Common myeloid progenitor, CD34-positive (primary cell): ENCODE measurements at regions of chr11 and their contacts with region 1.

Region 1: GRCh38 chr11:119057000-119057769 is at the start of gene HYOU1:
- DNase-seq: peak; percentile 96 to 98 (median 98)
- H3K4me3 ChIP-seq: peak within 1 kb of the TSS; percentile 63 to 92 (median 79)
- H3K27ac ChIP-seq: peak within 1 kb of the TSS; percentile 89 to 95
- H3K4me1 ChIP-seq: peaks cover 4 to 22% (median 19%) of the 10 kb centered on the region in 4 experiments
- H3K27me3 ChIP-seq: no peaks in the 10 kb centered on the region

Region 2: GRCh38 chr11:119018074-119018938 is 38.9 kb before region 1 on chr11 and contains the starts of genes RPS25 and TRAPPC4:
- CTCF ChIA-PET with region 1: interaction called, 3 read pairs
- POLR2A ChIA-PET with region 1: interaction called, 13 read pairs
- DNase-seq: peak; percentile 98 to 99 (median 99)
- H3K4me3 ChIP-seq: peak within 1 kb of the TSS; percentile 94 to 100 (median 96)
- H3K27ac ChIP-seq: peak within 1 kb of the TSS; percentile 87 to 96
- H3K4me1 ChIP-seq: peaks cover 17 to 32% (median 23%) of the 10 kb centered on the region in 4 experiments
- H3K27me3 ChIP-seq: no peaks in the 10 kb centered on the region

Region 3: DNA sequence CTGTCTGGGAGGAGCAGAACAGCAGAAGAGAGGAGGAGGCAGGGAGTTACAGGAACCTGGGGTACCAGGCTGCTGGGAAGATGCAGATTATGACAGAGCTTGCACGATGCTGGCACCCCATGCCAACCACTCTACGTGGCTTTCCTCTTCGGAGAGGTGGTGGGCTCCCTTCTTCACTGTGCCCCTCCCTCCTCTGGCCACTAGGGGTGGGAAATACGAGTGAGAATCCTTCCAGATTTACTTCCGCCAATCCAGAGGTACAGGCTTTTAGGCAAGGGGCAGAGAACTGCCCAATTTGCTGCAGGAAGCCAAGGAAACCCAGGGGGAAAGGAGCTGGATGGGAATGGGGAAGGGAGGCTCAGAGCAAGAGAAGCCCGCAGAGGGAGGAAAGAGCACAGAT is 12.5 kb before region 1 on chr11:
- CTCF ChIA-PET with region 1: interaction called, 36 read pairs
- POLR2A ChIA-PET with region 1: interaction called, 15 read pairs
- DNase-seq: no peak
- H3K4me3 ChIP-seq: no peak overlapping the region
- H3K27ac ChIP-seq: no peak overlapping the region
- H3K4me1 ChIP-seq: no peaks in the 10 kb centered on the region
- H3K27me3 ChIP-seq: no peaks in the 10 kb centered on the region

Region 4: DNA sequence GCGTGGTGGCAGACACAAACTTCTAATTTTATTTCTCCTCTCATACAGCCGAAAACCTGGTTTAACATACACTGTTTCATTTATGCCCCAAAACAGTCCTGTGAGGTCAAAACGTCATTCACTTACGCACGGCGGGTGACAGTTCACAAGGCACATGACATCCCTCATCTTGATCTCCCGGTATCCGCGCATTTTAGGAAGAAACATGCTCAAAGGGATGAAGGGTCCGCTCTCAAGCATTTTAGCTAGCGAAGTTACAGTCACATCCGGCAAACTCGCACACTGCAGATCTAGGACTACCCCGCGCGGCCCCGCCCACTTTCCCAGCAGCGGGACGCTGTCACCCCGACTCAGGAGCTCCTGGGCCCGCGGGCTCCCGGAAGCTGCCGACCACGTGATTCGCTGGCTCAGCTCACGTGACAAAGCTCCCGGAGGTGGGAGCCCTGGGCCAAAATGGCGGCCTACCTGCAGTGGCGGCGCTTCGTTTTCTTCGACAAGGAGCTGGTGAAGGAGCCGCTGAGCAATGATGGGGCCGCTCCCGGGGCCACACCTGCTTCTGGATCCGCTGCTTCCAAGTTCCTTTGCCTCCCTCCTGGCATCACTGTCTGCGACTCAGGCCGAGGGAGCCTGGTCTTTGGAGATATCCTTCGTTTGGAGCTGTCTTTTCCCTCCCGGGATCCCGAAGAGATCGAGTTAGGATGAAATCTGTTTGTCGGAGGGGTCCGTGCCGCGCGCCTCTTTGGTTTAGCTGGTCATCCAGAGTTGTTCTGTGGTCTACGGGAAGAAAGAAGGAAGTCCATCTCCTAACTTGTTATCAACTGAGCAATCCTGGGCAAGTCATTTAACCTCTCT is 10.4 kb after region 1 on chr11 and contains the start of gene VPS11:
- CTCF ChIA-PET with region 1: interaction called, 20 read pairs
- POLR2A ChIA-PET with region 1: interaction called, 36 read pairs
- DNase-seq: peak; percentile 97 to 99 (median 98)
- H3K4me3 ChIP-seq: peak within 1 kb of the TSS; percentile 83 to 100 (median 99)
- H3K27ac ChIP-seq: peak within 1 kb of the TSS; percentile 81 to 95
- H3K4me1 ChIP-seq: peaks cover 5 to 28% (median 17%) of the 10 kb centered on the region in 4 experiments
- H3K27me3 ChIP-seq: no peaks in the 10 kb centered on the region

Region 5: DNA sequence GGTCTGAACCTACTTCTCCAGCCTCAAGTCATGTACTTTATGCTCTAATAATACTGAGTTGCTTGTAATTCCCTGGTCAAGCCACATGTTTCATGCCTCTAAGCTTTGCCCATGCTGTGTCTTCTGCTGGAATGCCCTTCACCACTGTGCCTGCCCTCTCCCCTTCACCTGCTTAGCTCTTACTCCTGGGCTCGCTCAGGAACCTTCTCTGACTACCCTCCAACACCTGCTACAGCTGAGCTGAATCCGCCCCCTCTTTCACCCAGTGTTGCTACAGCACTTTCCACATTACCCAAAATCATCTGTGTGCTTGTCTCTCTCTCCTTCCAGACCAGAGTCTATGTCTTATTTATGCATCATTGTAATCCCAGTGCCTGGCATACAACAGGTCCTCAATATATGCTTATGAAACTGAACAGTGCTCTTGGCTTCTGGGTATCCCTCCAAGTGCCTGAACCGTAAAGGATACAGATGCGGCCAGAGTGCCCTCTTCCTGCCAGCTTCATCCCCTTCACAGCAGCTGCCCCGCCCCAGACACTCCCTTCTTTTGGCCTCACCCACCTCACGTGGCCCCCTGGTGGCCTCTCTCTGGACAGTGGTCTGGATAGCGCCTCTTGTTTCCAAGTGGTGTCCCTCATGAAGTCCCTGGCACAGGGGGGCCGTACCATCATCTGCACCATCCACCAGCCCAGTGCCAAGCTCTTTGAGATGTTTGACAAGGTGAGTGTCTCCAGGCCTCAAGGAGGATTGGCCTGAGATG is 98.7 kb after region 1 on chr11:
- CTCF ChIA-PET with region 1: no interaction called
- POLR2A ChIA-PET with region 1: no interaction called
- DNase-seq: peak in 2 of 3 donors; percentile 26 to 36
- H3K4me3 ChIP-seq: no peak overlapping the region
- H3K27ac ChIP-seq: no peak overlapping the region
- H3K4me1 ChIP-seq: no peaks in the 10 kb centered on the region
- H3K27me3 ChIP-seq: peaks cover 0 to 13% (median 5%) of the 10 kb centered on the region in 5 experiments